Activated CD8-positive, alpha-beta memory T cell treated with anti-CD3 and anti-CD28 coated beads, Interleukin-2, amount 10 ng/mL, durations not matched to agents 7 days and 5 days (primary cell): ENCODE measurements at regions of chr12 and their contacts with region 1.

Region 1: GRCh38 chr12:51238510-51239334 is at the start of gene DAZAP2:
- DNase-seq: peak; percentile 98
- ATAC-seq: peak; percentile 96
- H3K4me3 Mint-ChIP-seq: peak within 1 kb of the TSS; percentile 91
- H3K27ac Mint-ChIP-seq: peak within 1 kb of the TSS; percentile 98
- H3K4me1 Mint-ChIP-seq: peaks cover 35% of the 10 kb centered on the region
- H3K27me3 Mint-ChIP-seq: no peaks in the 10 kb centered on the region
- total RNA-seq, gene DAZAP2: 174 to 181 TPM

Region 2: DNA sequence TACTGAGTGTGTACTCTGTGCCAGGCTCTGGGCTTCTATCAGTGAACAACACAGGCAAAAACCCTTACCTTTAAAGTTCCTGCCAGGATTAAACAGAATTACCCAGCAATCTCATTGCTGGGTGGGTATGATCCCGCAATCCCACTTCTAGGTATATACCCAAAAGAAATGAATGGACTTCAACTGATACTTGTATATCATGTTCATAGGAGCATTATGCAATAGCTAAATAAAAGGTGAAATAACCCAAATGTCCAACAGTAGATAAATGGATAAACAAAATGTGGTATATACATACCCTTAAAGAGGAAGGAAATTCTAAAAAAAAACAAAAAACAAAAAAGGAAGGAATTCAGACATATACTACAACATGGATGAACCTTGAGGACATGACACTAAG is 14.6 kb after region 1 on chr12:
- CTCF ChIA-PET with region 1: interaction called, 11 read pairs
- DNase-seq: no peak
- ATAC-seq: no peak
- H3K4me3 Mint-ChIP-seq: no peak overlapping the region
- H3K27ac Mint-ChIP-seq: no peak overlapping the region
- H3K4me1 Mint-ChIP-seq: peaks cover 4% of the 10 kb centered on the region
- H3K27me3 Mint-ChIP-seq: no peaks in the 10 kb centered on the region

Region 3: GRCh38 chr12:51329742-51330141 is 91.0 kb after region 1 on chr12:
- CTCF ChIA-PET with region 1: no interaction called
- DNase-seq: no peak
- ATAC-seq: no peak
- H3K4me3 Mint-ChIP-seq: peak overlapping the region; percentile 32
- H3K27ac Mint-ChIP-seq: peak overlapping the region; percentile 72
- H3K4me1 Mint-ChIP-seq: peaks cover 53% of the 10 kb centered on the region
- H3K27me3 Mint-ChIP-seq: no peaks in the 10 kb centered on the region